ENCODE measurements at regions of chr4 and their contacts with region 1.

Region 1: DNA sequence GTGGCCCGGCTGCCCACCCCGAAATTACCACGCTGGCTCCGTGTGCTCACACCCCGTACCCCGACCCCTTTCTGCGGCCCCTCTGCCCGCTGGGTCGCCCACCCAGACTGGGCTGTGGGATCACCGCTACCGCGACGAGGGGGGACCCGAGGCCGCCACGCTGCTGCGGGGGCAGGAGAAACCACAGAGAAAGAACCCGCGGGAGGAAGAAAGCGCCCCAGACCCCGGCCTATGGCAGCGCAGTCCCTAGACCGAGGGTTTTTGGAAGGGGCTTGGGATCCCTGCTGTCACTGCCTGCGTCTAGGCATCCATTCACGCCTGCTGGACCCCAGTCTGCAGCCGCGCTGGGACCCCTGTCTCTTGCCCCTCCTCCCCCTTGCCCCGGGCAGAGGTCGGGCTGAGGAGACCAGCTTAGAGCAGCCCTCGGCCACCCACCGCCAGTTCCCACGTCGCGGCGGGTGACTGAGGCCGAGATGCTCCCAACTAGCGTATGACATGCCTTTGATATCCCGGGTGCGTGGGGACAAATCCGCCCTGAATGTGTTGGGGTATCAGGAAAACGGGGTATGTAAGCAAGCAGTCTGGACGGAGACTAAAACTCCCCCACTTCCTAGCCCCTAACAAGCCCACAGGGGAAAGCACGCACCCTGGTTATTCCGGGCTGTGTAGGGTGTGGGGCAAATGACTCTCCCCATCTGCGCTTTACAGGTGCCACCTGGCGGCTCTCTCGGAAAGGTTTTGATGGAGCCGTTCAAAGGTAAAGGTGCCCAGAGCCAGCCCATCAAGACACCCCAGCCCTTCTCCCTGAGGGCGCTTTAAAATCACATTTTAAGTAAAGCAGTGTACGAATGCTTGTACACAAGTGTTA is 862 bp upstream of the INPP4B start:
- DNase-seq: no peak
- H3K4me3 ChIP-seq: peak overlapping the region; percentile 73
- CTCF ChIP-seq: peak; percentile 50

Region 2: DNA sequence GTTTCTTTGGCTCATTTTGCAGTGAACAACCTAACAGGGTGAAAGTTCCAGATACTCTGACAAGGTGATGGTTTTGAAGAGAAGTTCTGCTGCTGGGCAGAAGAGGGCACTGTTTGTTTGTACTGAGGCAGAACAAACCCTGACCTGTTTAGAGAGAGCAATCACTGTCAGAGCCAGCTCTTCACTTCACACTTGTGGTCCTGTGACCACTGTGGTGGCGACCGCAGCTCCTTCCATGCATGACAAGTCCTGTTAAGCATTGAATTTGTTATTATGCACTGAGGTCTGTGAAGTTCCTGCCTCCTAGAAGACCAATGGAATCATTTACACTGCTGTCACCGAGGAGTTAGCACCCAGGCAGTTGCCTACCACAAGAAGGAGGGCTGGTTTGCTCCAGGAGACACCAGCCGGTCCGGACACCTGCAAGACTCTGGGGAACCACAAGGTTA is 1539.7 kb before region 1 on chr4:
- in situ Hi-C with region 1: loop called (anchors 25 kb)
- DNase-seq: peak; percentile 84
- H3K4me3 ChIP-seq: no peak overlapping the region
- CTCF ChIP-seq: peak; percentile 73

Region 3: DNA sequence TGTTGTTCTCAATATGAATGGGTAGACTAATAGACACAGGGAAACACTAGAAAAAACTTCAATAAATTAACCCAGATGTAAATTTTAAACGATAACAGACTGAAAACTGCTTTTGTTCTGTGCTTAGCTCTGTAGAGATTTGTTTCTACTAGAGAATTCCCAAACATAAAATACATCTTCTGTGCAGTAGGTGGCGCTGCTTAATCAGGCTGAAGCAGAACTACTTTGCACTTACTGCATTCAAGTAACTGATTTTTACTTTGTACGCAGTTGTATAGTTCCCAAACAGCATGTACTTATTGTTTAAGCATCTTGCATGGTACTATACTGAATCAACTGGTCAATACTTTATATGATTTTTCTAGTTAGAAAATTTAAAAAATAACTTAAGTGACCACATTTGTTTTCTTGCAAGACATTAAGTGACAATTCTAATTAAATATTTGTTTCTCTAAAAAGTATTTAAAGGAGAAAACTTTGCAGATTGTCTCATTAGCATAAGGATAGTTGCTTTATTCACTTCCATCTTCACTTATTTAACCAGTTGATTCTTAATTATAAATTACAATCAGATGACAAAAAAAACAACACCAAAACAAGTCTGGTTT is 720.0 kb before region 1 on chr4:
- in situ Hi-C with region 1: loop called (anchors 25 kb)
- DNase-seq: peak; percentile 74
- H3K4me3 ChIP-seq: no peak overlapping the region
- CTCF ChIP-seq: peak; percentile 68

Region 4: DNA sequence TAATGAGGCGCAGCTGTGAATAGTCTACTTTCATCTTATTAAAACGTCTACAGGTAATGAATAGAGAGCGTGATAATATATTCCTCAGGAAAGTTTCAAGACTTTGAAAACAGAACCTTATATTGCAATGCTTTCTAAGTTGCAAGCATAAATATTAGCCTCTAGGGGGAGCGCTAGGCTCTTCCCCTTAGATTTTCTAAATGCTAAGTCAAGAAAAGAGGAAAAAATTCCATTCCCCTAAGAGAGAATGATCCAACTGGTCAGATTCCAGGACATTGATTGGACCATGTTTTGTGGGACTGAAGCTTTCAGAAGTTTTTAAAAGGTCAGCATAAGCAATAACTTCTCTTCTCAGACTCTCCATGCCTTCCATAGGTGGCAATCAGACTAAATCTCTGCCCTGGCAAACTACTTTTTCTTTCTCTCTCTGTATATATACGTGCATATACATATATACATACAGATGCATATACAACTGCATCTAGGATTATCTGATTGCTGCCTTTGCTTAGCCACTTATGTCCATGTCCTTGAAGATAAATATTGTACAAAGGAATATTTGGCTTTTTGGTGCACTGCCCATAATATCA is 493.7 kb before region 1 on chr4:
- in situ Hi-C with region 1: loop called (anchors 10 kb)
- DNase-seq: peak; percentile 72
- H3K4me3 ChIP-seq: no peak overlapping the region
- CTCF ChIP-seq: peak; percentile 74

Region 5: DNA sequence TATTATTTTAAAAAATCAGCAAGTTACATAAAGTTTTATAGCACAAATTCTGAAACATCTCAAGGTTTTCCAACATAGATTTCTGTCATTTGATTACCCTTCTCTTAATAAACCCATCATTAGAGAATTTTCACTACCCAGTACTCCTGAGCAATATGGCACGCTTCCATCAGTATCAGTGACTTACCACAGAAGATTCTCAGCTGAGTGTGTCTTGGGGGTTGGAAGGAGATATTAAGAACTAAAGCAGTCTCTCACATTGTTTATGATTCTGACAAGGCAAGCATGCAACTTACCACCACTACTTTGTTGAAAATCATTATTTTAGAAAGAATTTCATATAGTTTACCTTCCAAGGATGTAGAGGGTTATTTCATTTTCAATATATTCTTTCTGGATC is 68.5 kb before region 1 on chr4:
- in situ Hi-C with region 1: no loop called
- DNase-seq: peak; percentile 1
- H3K4me3 ChIP-seq: no peak overlapping the region
- CTCF ChIP-seq: no peak